ENCODE measurements at regions of chr14 and their contacts with region 1.

Region 1: GRCh38 chr14:50599700-50600444 is 39.9 kb downstream of the ATL1 start:
- DNase-seq: no peak

Region 2: DNA sequence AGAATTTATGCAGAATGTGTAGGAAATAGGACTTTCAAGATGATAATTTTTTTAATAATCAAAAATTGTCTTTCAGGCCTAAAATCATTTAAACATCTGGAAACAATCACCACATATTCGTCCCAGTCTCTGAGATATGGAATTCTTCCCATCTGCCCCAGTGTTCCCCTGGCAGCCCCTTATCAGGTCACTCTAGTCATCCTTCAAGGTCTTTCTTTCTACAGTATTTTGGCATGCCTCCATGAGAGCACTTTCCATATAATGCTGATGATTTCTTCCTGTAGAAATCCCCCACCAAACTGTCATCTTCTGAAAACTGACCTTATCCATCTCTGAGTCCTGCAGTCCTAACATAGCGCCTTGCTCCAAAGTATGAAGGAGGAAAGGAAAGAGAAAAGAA is 1435.8 kb before region 1 on chr14:
- intact Hi-C with region 1: no loop called
- DNase-seq: no peak

Region 3: GRCh38 chr14:50714450-50715073 is 114.7 kb after region 1 on chr14:
- intact Hi-C with region 1: loop called in 1 of 2 experiments (anchors 10 kb)
- DNase-seq: no peak

Measured in posterior vena cava (tissue), 2 donors.